Heart left ventricle (tissue), 16 donors: ENCODE measurements at regions of chr20 and their contacts with region 1.

Region 1: DNA sequence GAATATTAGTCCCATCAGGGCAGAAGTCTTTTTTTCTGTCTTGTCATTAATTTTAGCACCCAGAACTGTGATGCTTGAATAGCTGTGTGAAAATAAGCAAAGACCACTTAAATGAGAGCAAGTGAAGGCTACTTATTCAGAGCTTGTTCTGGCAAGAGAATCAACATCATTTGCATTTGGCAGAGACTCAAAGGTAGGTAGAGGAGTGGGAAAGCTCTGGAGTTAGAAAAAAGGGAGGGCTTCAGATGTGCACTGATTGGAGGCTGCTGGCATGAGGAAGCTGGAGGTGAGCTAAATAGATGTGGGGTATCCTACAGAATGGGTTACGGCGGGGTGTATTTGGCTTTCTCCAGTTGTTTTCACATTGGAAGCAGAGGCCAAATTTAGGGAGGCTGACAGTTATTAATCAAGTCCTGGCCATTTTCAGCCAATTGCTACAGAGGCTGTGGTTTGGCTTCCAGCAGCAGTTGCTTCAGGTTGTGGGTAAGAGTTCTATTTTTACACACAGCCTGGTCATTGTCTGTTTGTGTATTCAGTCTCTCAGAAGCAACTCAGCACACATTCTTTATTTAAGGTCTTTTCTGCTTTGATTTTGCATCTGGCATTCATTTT is 254.3 kb downstream of the BTBD3 start:
- DNase-seq: peak in 2 of 5 donors; percentile 13 to 26
- ATAC-seq: peak; percentile 80 to 97 (median 94)
- H3K4me3 ChIP-seq: no peak overlapping the region
- H3K27ac ChIP-seq: peak overlapping the region in 9 of 12 donors; percentile 1 to 63 (median 36)
- H3K4me1 ChIP-seq: peaks cover 0 to 26% (median 13%) of the 10 kb centered on the region in 12 donors
- H3K27me3 ChIP-seq: no peaks in the 10 kb centered on the region
- CTCF ChIP-seq: no peak
- POLR2A ChIP-seq: no peak

Region 2: GRCh38 chr20:11890331-11891080 is 281.5 kb before region 1 on chr20:
- intact Hi-C with region 1: loop called in 1 of 10 experiments (anchors 10 kb)
- DNase-seq: peak; percentile 91 to 95 (median 93)
- ATAC-seq: peak; percentile 97 to 98 (median 98)
- H3K4me3 ChIP-seq: peak overlapping the region; percentile 45 to 88 (median 76)
- H3K27ac ChIP-seq: peak overlapping the region; percentile 84 to 98 (median 93)
- H3K4me1 ChIP-seq: peaks cover 0 to 42% (median 25%) of the 10 kb centered on the region in 12 donors
- H3K27me3 ChIP-seq: no peaks in the 10 kb centered on the region
- CTCF ChIP-seq: no peak
- POLR2A ChIP-seq: peak in 1 of 2 donors; percentile 56

Region 3: GRCh38 chr20:12113468-12114371 is 58.3 kb before region 1 on chr20:
- intact Hi-C with region 1: no loop called
- DNase-seq: peak in 4 of 5 donors; percentile 39 to 51 (median 44)
- ATAC-seq: peak; percentile 78 to 94 (median 90)
- H3K4me3 ChIP-seq: peak overlapping the region in 1 of 12 donors; percentile 4
- H3K27ac ChIP-seq: peak overlapping the region in 10 of 12 donors; percentile 14 to 65 (median 39)
- H3K4me1 ChIP-seq: peaks cover 0 to 19% (median 5%) of the 10 kb centered on the region in 12 donors
- H3K27me3 ChIP-seq: no peaks in the 10 kb centered on the region
- CTCF ChIP-seq: peak in 1 of 12 donors; percentile 8
- POLR2A ChIP-seq: no peak

Region 4: GRCh38 chr20:12237772-12238171 is 65.7 kb after region 1 on chr20:
- intact Hi-C with region 1: loop called in 1 of 10 experiments (anchors 10 kb)
- DNase-seq: peak in 2 of 5 donors; percentile 33 to 38
- ATAC-seq: peak in 2 of 4 donors; percentile 24 to 52
- H3K4me3 ChIP-seq: peak overlapping the region in 1 of 12 donors; percentile 12
- H3K27ac ChIP-seq: no peak overlapping the region
- H3K4me1 ChIP-seq: peaks cover 0 to 9% (median 0%) of the 10 kb centered on the region in 12 donors
- H3K27me3 ChIP-seq: no peaks in the 10 kb centered on the region
- CTCF ChIP-seq: no peak
- POLR2A ChIP-seq: no peak

Region 5: GRCh38 chr20:12337607-12338006 is 165.6 kb after region 1 on chr20:
- intact Hi-C with region 1: no loop called
- DNase-seq: no peak
- ATAC-seq: no peak
- H3K4me3 ChIP-seq: no peak overlapping the region
- H3K27ac ChIP-seq: no peak overlapping the region
- H3K4me1 ChIP-seq: no peaks in the 10 kb centered on the region
- H3K27me3 ChIP-seq: no peaks in the 10 kb centered on the region
- CTCF ChIP-seq: no peak
- POLR2A ChIP-seq: no peak